CD8-positive, alpha-beta T cell (primary cell): ENCODE measurements at regions of chrX and their contacts with region 1.

Region 1: GRCh38 chrX:140733769-140734342 is 24.3 kb downstream of the LINC00632 start:
- DNase-seq: peak in 3 of 9 experiments; percentile 10 to 32 (median 12)
- ATAC-seq: no peak
- H3K4me3 ChIP-seq: no peak overlapping the region
- H3K4me3 Mint-ChIP-seq: no peak overlapping the region
- H3K27ac ChIP-seq: no peak overlapping the region
- H3K27ac Mint-ChIP-seq: no peak overlapping the region
- H3K4me1 ChIP-seq: no peaks in the 10 kb centered on the region
- H3K4me1 Mint-ChIP-seq: no peaks in the 10 kb centered on the region
- H3K27me3 ChIP-seq: no peaks in the 10 kb centered on the region
- H3K27me3 Mint-ChIP-seq: no peaks in the 10 kb centered on the region
- CTCF ChIP-seq: no peak

Region 2: GRCh38 chrX:138775517-138775916 is 1958.3 kb before region 1 on chrX:
- CTCF ChIA-PET with region 1: no interaction called
- POLR2A ChIA-PET with region 1: no interaction called
- intact Hi-C with region 1: loop called (anchors 10 kb)
- DNase-seq: peak in 1 of 9 experiments; percentile 1
- ATAC-seq: no peak
- H3K4me3 ChIP-seq: no peak overlapping the region
- H3K4me3 Mint-ChIP-seq: no peak overlapping the region
- H3K27ac ChIP-seq: no peak overlapping the region
- H3K27ac Mint-ChIP-seq: no peak overlapping the region
- H3K4me1 ChIP-seq: no peaks in the 10 kb centered on the region
- H3K4me1 Mint-ChIP-seq: no peaks in the 10 kb centered on the region
- H3K27me3 ChIP-seq: no peaks in the 10 kb centered on the region
- H3K27me3 Mint-ChIP-seq: no peaks in the 10 kb centered on the region
- CTCF ChIP-seq: no peak

Region 3: DNA sequence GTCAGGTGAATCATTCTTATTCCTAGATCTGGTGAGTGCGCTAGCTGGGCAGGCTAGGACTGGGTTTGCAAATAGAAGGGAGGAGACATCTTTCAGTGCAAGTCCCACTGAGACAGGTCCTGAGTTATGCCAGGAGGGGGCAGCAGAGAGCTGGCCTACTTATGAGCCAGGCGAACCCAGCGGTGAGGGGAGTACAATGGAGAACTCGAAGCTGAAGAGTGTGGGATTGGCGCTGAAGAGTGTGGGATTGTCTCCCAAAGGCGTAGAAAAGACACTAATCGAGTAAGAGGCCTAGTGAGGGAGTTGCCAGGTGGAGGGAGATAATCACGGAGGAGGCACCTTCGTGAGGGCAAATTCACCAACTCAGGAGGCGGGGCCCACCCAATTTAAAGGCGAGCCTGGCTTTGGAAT is 676.9 kb before region 1 on chrX:
- CTCF ChIA-PET with region 1: no interaction called
- POLR2A ChIA-PET with region 1: no interaction called
- intact Hi-C with region 1: loop called in 1 of 2 experiments (anchors 5 kb)
- DNase-seq: peak; percentile 3 to 59 (median 43)
- ATAC-seq: no peak
- H3K4me3 ChIP-seq: no peak overlapping the region
- H3K4me3 Mint-ChIP-seq: no peak overlapping the region
- H3K27ac ChIP-seq: no peak overlapping the region
- H3K27ac Mint-ChIP-seq: no peak overlapping the region
- H3K4me1 ChIP-seq: no peaks in the 10 kb centered on the region
- H3K4me1 Mint-ChIP-seq: peaks cover 2% of the 10 kb centered on the region
- H3K27me3 ChIP-seq: no peaks in the 10 kb centered on the region
- H3K27me3 Mint-ChIP-seq: no peaks in the 10 kb centered on the region
- CTCF ChIP-seq: peak; percentile 49

Region 4: DNA sequence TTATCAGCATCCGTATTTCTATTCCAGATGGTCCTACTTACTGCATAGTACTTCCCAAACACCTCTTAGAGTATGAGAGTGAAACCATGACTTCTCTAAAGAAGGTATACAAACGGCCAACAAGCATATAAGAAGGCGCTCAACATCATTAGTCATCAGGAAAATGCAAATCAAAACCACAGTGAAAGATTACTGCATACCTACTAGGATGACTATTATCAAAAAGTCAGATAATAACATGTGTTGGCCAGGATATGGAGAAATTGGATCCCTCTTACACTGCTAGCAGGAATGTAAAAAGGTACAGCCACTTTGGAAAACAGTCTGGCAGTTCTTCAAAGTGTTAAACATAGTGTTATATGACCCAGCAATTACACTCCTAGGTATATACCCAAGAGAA is 553.3 kb before region 1 on chrX:
- CTCF ChIA-PET with region 1: no interaction called
- POLR2A ChIA-PET with region 1: no interaction called
- intact Hi-C with region 1: no loop called
- DNase-seq: no peak
- ATAC-seq: no peak
- H3K4me3 ChIP-seq: no peak overlapping the region
- H3K4me3 Mint-ChIP-seq: no peak overlapping the region
- H3K27ac ChIP-seq: no peak overlapping the region
- H3K27ac Mint-ChIP-seq: no peak overlapping the region
- H3K4me1 ChIP-seq: no peaks in the 10 kb centered on the region
- H3K4me1 Mint-ChIP-seq: no peaks in the 10 kb centered on the region
- H3K27me3 ChIP-seq: no peaks in the 10 kb centered on the region
- H3K27me3 Mint-ChIP-seq: no peaks in the 10 kb centered on the region
- CTCF ChIP-seq: no peak

Region 5: GRCh38 chrX:140526171-140526570 is 207.7 kb before region 1 on chrX:
- CTCF ChIA-PET with region 1: no interaction called
- POLR2A ChIA-PET with region 1: no interaction called
- intact Hi-C with region 1: no loop called
- DNase-seq: no peak
- ATAC-seq: no peak
- H3K4me3 ChIP-seq: no peak overlapping the region
- H3K4me3 Mint-ChIP-seq: no peak overlapping the region
- H3K27ac ChIP-seq: no peak overlapping the region
- H3K27ac Mint-ChIP-seq: no peak overlapping the region
- H3K4me1 ChIP-seq: no peaks in the 10 kb centered on the region
- H3K4me1 Mint-ChIP-seq: no peaks in the 10 kb centered on the region
- H3K27me3 ChIP-seq: no peaks in the 10 kb centered on the region
- H3K27me3 Mint-ChIP-seq: no peaks in the 10 kb centered on the region
- CTCF ChIP-seq: no peak

Region 6: GRCh38 chrX:140701480-140701879 is 32.4 kb before region 1 on chrX:
- CTCF ChIA-PET with region 1: interaction called, 10 read pairs
- POLR2A ChIA-PET with region 1: no interaction called
- intact Hi-C with region 1: loop called in 1 of 2 experiments (anchors 1 kb)
- DNase-seq: peak in 2 of 9 experiments; percentile 2 to 16
- ATAC-seq: no peak
- H3K4me3 ChIP-seq: no peak overlapping the region
- H3K4me3 Mint-ChIP-seq: no peak overlapping the region
- H3K27ac ChIP-seq: no peak overlapping the region
- H3K27ac Mint-ChIP-seq: no peak overlapping the region
- H3K4me1 ChIP-seq: no peaks in the 10 kb centered on the region
- H3K4me1 Mint-ChIP-seq: no peaks in the 10 kb centered on the region
- H3K27me3 ChIP-seq: no peaks in the 10 kb centered on the region
- H3K27me3 Mint-ChIP-seq: no peaks in the 10 kb centered on the region
- CTCF ChIP-seq: no peak